Mammary epithelial cell (primary cell): ENCODE measurements at regions of chr4 and their contacts with region 1.

Region 1: GRCh38 chr4:120156120-120156718 is 89.6 kb upstream of the MAD2L1 start:
- DNase-seq: peak; percentile 35
- H3K4me3 ChIP-seq: no peak overlapping the region
- H3K27ac ChIP-seq: no peak overlapping the region
- H3K4me1 ChIP-seq: no peaks in the 10 kb centered on the region
- H3K27me3 ChIP-seq: no peaks in the 10 kb centered on the region
- CTCF ChIP-seq: peak; percentile 49 to 54

Region 2: GRCh38 chr4:119977076-119977940 is 178.9 kb before region 1 on chr4:
- CTCF ChIA-PET with region 1: no interaction called
- dilution Hi-C with region 1: no loop called
- in situ Hi-C with region 1: no loop called
- intact Hi-C with region 1: no loop called
- DNase-seq: no peak
- H3K4me3 ChIP-seq: no peak overlapping the region
- H3K27ac ChIP-seq: no peak overlapping the region
- H3K4me1 ChIP-seq: no peaks in the 10 kb centered on the region
- H3K27me3 ChIP-seq: no peaks in the 10 kb centered on the region
- CTCF ChIP-seq: no peak

Region 3: DNA sequence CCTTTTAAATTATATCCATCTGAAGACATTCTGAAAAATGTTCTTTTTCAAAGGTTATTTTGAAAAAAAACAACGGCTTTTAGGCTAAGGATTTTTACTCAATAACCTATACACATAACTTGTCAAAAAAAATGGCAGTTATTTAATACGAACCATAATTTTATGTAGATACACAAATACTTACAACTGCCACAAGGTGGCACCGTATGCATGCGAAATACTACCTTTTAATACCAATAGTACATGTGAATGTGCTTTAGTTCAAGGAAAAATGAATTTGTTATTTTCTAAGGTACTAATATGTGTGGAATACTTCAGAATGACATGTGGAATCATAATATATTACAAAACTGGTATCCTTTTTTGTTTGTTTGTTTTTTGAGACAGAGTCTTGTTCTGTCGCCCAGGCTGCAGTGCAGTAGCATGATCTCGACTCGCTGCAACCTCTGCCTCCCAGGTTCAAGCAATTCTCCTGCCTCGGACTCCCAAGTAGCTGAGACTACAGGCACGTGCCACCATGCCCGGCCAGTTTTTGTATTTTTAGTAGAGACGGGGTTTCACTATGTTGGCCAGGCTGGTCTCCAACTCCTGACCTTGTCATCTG is 84.9 kb before region 1 on chr4:
- CTCF ChIA-PET with region 1: no interaction called
- dilution Hi-C with region 1: no loop called
- in situ Hi-C with region 1: no loop called
- intact Hi-C with region 1: loop called (anchors 5 kb)
- DNase-seq: peak; percentile 38
- H3K4me3 ChIP-seq: no peak overlapping the region
- H3K27ac ChIP-seq: no peak overlapping the region
- H3K4me1 ChIP-seq: peaks cover 21% of the 10 kb centered on the region
- H3K27me3 ChIP-seq: no peaks in the 10 kb centered on the region
- CTCF ChIP-seq: peak; percentile 54 to 58

Region 4: DNA sequence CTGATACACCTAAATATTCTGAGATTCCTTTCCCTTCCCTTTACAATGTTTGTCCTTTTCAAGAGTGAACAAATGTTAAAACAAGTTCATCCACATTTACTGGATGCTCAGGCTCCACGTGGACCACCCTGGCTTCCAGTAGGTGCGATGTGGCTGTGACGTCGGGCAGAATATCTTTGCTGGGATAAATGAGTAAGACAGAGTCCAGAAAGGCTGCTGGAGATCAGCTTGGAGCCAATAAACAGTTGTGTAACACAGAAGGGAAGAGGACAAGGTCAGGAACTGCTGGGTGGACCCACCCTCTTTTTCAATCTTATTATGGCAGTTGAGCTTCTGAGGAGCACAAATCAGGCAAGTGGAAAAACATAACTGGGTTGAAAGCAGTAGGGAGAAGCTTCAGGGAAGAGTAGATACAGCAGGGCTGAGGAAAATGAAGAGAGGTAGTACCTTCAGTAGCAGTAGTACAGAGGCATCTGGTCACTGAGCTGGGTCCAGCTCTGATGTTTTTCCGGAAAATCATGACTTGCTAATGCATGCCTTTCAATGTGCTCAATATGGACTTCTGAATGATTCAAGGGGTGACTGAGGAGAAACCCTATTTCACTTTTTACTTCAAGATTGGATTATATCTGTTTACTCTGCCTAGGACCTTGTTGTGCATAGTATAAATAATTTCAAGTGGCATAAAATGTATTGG is 82.2 kb after region 1 on chr4:
- CTCF ChIA-PET with region 1: no interaction called
- dilution Hi-C with region 1: no loop called
- in situ Hi-C with region 1: no loop called
- intact Hi-C with region 1: loop called (anchors 5 kb)
- DNase-seq: no peak
- H3K4me3 ChIP-seq: no peak overlapping the region
- H3K27ac ChIP-seq: no peak overlapping the region
- H3K4me1 ChIP-seq: no peaks in the 10 kb centered on the region
- H3K27me3 ChIP-seq: peaks cover 2% of the 10 kb centered on the region
- CTCF ChIP-seq: no peak

Region 5: GRCh38 chr4:120266602-120267001 is 110.4 kb after region 1 on chr4:
- CTCF ChIA-PET with region 1: interaction called, 10 read pairs
- dilution Hi-C with region 1: no loop called
- in situ Hi-C with region 1: no loop called
- intact Hi-C with region 1: no loop called
- DNase-seq: peak; percentile 50
- H3K4me3 ChIP-seq: no peak overlapping the region
- H3K27ac ChIP-seq: no peak overlapping the region
- H3K4me1 ChIP-seq: no peaks in the 10 kb centered on the region
- H3K27me3 ChIP-seq: no peaks in the 10 kb centered on the region
- CTCF ChIP-seq: peak; percentile 10 to 30

Region 6: GRCh38 chr4:120718979-120719566 is 562.9 kb after region 1 on chr4:
- CTCF ChIA-PET with region 1: no interaction called
- dilution Hi-C with region 1: no loop called
- in situ Hi-C with region 1: no loop called
- intact Hi-C with region 1: loop called (anchors 10 kb)
- DNase-seq: peak; percentile 11
- H3K4me3 ChIP-seq: no peak overlapping the region
- H3K27ac ChIP-seq: no peak overlapping the region
- H3K4me1 ChIP-seq: no peaks in the 10 kb centered on the region
- H3K27me3 ChIP-seq: no peaks in the 10 kb centered on the region
- CTCF ChIP-seq: peak; percentile 61 to 77

Region 7: GRCh38 chr4:121096629-121097028 is 940.4 kb after region 1 on chr4:
- CTCF ChIA-PET with region 1: no interaction called
- dilution Hi-C with region 1: no loop called
- in situ Hi-C with region 1: loop called (anchors 25 kb)
- intact Hi-C with region 1: loop called (anchors 1 kb)
- DNase-seq: peak; percentile 7
- H3K4me3 ChIP-seq: no peak overlapping the region
- H3K27ac ChIP-seq: no peak overlapping the region
- H3K4me1 ChIP-seq: no peaks in the 10 kb centered on the region
- H3K27me3 ChIP-seq: peaks cover 2% of the 10 kb centered on the region
- CTCF ChIP-seq: peak; percentile 30 to 54

Region 8: GRCh38 chr4:121112530-121112929 is 956.3 kb after region 1 on chr4:
- CTCF ChIA-PET with region 1: no interaction called
- dilution Hi-C with region 1: no loop called
- in situ Hi-C with region 1: loop called (anchors 25 kb)
- intact Hi-C with region 1: no loop called
- DNase-seq: no peak
- H3K4me3 ChIP-seq: no peak overlapping the region
- H3K27ac ChIP-seq: no peak overlapping the region
- H3K4me1 ChIP-seq: no peaks in the 10 kb centered on the region
- H3K27me3 ChIP-seq: peaks cover 4% of the 10 kb centered on the region
- CTCF ChIP-seq: peak; percentile 39 to 45